B cell (primary cell): ENCODE measurements at regions of chr7 and their contacts with region 1.

Region 1: DNA sequence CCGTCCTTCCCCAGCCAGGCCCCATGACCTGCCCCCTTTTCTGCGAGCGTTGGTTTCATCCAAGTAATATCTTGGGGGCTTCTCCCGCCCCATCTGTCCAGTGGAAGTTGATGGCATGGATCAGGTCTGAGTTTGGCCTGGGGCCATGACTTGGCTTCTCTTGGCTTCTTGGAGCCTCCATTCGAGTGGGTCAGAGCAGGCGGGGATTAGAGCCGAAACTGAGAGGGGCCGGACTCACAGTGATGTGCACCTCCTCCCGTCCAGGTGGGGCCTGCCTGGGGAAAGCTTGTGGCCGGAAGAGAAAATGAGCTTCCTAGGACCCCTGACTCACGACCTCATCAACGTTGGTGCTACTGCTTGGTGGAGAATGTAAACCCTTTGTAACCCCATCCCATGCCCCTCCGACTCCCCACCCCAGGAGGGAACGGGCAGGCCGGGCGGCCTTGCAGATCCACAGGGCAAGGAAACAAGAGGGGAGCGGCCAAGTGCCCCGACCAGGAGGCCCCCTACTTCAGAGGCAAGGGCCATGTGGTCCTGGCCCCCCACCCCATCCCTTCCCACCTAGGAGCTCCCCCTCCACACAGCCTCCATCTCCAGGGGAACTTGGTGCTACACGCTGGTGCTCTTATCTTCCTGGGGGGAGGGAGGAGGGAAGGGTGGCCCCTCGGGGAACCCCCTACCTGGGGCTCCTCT is 15.1 kb upstream of the LIMK1 start:
- DNase-seq: peak; percentile 17
- ATAC-seq: no peak
- H3K4me3 ChIP-seq: no peak overlapping the region
- H3K4me3 Mint-ChIP-seq: no peak overlapping the region
- H3K27ac ChIP-seq: no peak overlapping the region
- H3K27ac Mint-ChIP-seq: no peak overlapping the region
- H3K4me1 ChIP-seq: peaks cover 0 to 3% of the 10 kb centered on the region in 2 donors
- H3K4me1 Mint-ChIP-seq: no peaks in the 10 kb centered on the region
- H3K27me3 ChIP-seq: no peaks in the 10 kb centered on the region
- H3K27me3 Mint-ChIP-seq: no peaks in the 10 kb centered on the region
- CTCF ChIP-seq: no peak

Region 2: GRCh38 chr7:74083117-74083876 is 14.8 kb after region 1 on chr7 and contains the start of gene LIMK1:
- CTCF ChIA-PET with region 1: interaction called, 4 read pairs
- POLR2A ChIA-PET with region 1: interaction called, 10 read pairs
- intact Hi-C with region 1: no loop called
- DNase-seq: peak; percentile 89
- ATAC-seq: peak; percentile 95
- H3K4me3 ChIP-seq: peak within 1 kb of the TSS; percentile 19 to 68 (median 53)
- H3K4me3 Mint-ChIP-seq: peak within 1 kb of the TSS; percentile 86
- H3K27ac ChIP-seq: peak within 1 kb of the TSS in 1 of 2 donors; percentile 33
- H3K27ac Mint-ChIP-seq: peak within 1 kb of the TSS; percentile 63
- H3K4me1 ChIP-seq: peaks cover 7 to 21% of the 10 kb centered on the region in 2 donors
- H3K4me1 Mint-ChIP-seq: peaks cover 16% of the 10 kb centered on the region
- H3K27me3 ChIP-seq: no peaks in the 10 kb centered on the region
- H3K27me3 Mint-ChIP-seq: no peaks in the 10 kb centered on the region
- CTCF ChIP-seq: no peak
- total RNA-seq, gene LIMK1: 63.8 and 70.8 TPM in 2 replicates

Region 3: GRCh38 chr7:74101061-74101681 is 32.6 kb after region 1 on chr7:
- CTCF ChIA-PET with region 1: interaction called, 11 read pairs
- POLR2A ChIA-PET with region 1: interaction called, 4 read pairs
- intact Hi-C with region 1: loop called (anchors 1 kb)
- DNase-seq: peak; percentile 93
- ATAC-seq: peak; percentile 81
- H3K4me3 ChIP-seq: no peak overlapping the region
- H3K4me3 Mint-ChIP-seq: peak overlapping the region; percentile 64
- H3K27ac ChIP-seq: peak overlapping the region; percentile 85 to 88
- H3K27ac Mint-ChIP-seq: peak overlapping the region; percentile 98
- H3K4me1 ChIP-seq: peaks cover 23 to 27% of the 10 kb centered on the region in 2 donors
- H3K4me1 Mint-ChIP-seq: peaks cover 34% of the 10 kb centered on the region
- H3K27me3 ChIP-seq: no peaks in the 10 kb centered on the region
- H3K27me3 Mint-ChIP-seq: no peaks in the 10 kb centered on the region
- CTCF ChIP-seq: no peak

Region 4: GRCh38 chr7:74115326-74115725 is 46.8 kb after region 1 on chr7:
- CTCF ChIA-PET with region 1: interaction called, 3 read pairs
- POLR2A ChIA-PET with region 1: interaction called, 3 read pairs
- intact Hi-C with region 1: loop called (anchors 5 kb)
- DNase-seq: no peak
- ATAC-seq: no peak
- H3K4me3 ChIP-seq: no peak overlapping the region
- H3K4me3 Mint-ChIP-seq: no peak overlapping the region
- H3K27ac ChIP-seq: no peak overlapping the region
- H3K27ac Mint-ChIP-seq: no peak overlapping the region
- H3K4me1 ChIP-seq: no peaks in the 10 kb centered on the region
- H3K4me1 Mint-ChIP-seq: no peaks in the 10 kb centered on the region
- H3K27me3 ChIP-seq: no peaks in the 10 kb centered on the region
- H3K27me3 Mint-ChIP-seq: no peaks in the 10 kb centered on the region
- CTCF ChIP-seq: no peak

Region 5: GRCh38 chr7:74173866-74174605 is 105.5 kb after region 1 on chr7 and contains the start of gene EIF4H:
- CTCF ChIA-PET with region 1: interaction called, 15 read pairs
- POLR2A ChIA-PET with region 1: interaction called, 8 read pairs
- intact Hi-C with region 1: loop called (anchors 2 kb)
- DNase-seq: peak; percentile 98
- ATAC-seq: peak; percentile 84
- H3K4me3 ChIP-seq: peak within 1 kb of the TSS; percentile 67 to 93 (median 84)
- H3K4me3 Mint-ChIP-seq: peak within 1 kb of the TSS; percentile 95
- H3K27ac ChIP-seq: peak within 1 kb of the TSS; percentile 88 to 94
- H3K27ac Mint-ChIP-seq: peak within 1 kb of the TSS; percentile 98
- H3K4me1 ChIP-seq: peaks cover 44 to 52% of the 10 kb centered on the region in 2 donors
- H3K4me1 Mint-ChIP-seq: peaks cover 42% of the 10 kb centered on the region
- H3K27me3 ChIP-seq: no peaks in the 10 kb centered on the region
- H3K27me3 Mint-ChIP-seq: no peaks in the 10 kb centered on the region
- CTCF ChIP-seq: no peak
- total RNA-seq, gene EIF4H: 180 and 199 TPM in 2 replicates

Region 6: DNA sequence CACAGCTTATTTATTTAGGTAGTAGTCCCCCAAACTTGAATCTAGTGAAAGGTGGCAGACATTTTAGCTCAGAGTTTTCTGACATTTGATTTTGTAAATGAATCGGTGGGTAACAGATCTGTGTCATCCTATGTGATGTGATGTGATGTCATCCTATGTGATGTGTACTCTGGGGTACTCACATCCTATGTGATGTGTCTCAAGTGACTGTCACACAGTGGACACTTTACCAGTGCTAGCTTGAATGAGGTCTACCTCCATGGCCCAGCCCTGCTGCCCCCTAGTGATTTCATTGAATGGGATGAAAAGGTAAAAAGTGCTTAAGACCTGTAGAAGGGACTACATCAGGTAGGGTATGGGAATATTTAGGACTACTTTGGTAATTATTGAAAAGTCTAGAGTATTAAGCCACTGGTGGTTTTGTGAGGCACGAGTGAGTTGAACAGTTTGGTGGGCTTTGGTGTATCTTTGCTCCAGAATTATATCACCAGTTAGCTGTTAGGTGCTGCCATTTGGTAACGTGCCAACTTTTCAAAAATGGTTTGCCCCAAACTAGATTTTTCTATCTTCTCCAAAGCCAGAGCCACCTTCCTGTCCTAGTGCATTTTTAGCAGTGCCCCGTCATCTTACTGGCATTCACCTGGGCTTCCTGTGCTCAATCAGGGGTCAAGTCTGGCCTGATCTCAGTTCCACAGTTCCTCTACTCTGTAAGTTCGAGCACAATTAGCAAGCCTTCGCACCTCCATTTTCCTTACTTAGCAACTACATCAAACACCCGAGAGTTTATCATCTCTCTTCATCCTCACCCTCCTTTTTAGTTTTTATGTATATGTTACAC is 115.3 kb after region 1 on chr7:
- CTCF ChIA-PET with region 1: interaction called, 24 read pairs
- POLR2A ChIA-PET with region 1: interaction called, 9 read pairs
- intact Hi-C with region 1: loop called (anchors 1 kb)
- DNase-seq: peak; percentile 46
- ATAC-seq: peak; percentile 56
- H3K4me3 ChIP-seq: no peak overlapping the region
- H3K4me3 Mint-ChIP-seq: peak overlapping the region; percentile 8
- H3K27ac ChIP-seq: peak overlapping the region in 1 of 2 donors; percentile 66
- H3K27ac Mint-ChIP-seq: peak overlapping the region; percentile 65
- H3K4me1 ChIP-seq: peaks cover 50 to 69% of the 10 kb centered on the region in 2 donors
- H3K4me1 Mint-ChIP-seq: peaks cover 78% of the 10 kb centered on the region
- H3K27me3 ChIP-seq: no peaks in the 10 kb centered on the region
- H3K27me3 Mint-ChIP-seq: no peaks in the 10 kb centered on the region
- CTCF ChIP-seq: peak; percentile 50

Region 7: DNA sequence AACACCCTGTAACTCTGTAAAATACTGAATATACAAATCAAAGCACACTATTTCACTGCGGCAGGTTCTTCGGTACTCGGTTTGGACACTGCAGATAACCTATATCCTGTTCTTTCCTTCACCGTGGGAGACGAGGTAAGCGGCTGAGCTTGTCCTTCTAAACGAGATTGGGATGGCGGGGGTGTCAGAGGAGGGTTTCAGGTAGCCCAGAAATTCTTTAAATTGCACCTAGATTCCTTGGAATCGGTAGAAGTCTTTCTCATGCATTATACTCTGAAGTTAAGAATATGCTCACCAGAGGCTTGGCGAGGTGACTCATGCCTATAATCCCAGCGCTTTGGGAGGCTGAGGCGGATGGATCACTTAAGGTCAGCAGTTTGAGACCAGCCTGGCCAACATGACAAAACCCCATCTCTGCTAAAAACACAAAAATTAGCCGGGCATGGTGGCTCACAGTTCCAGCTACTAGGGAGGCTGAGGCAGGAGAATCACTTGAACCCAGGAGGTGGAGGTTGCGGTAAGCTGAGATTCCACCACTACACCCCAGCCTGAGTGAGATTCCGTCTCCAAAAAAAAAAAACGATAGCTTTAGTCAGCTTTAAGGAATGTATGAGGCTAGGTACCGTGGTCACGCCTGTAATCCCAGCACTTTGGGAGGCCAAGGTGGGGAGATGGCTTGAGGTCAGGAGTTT is 131.2 kb after region 1 on chr7:
- CTCF ChIA-PET with region 1: interaction called, 55 read pairs
- POLR2A ChIA-PET with region 1: no interaction called
- intact Hi-C with region 1: no loop called
- DNase-seq: no peak
- ATAC-seq: no peak
- H3K4me3 ChIP-seq: no peak overlapping the region
- H3K4me3 Mint-ChIP-seq: no peak overlapping the region
- H3K27ac ChIP-seq: no peak overlapping the region
- H3K27ac Mint-ChIP-seq: no peak overlapping the region
- H3K4me1 ChIP-seq: peaks cover 9 to 12% of the 10 kb centered on the region in 2 donors
- H3K4me1 Mint-ChIP-seq: peaks cover 15% of the 10 kb centered on the region
- H3K27me3 ChIP-seq: no peaks in the 10 kb centered on the region
- H3K27me3 Mint-ChIP-seq: no peaks in the 10 kb centered on the region
- CTCF ChIP-seq: no peak